CD8-positive, alpha-beta memory T cell (primary cell): ENCODE measurements at regions of chr16 and their contacts with region 1.

Region 1: GRCh38 chr16:56600398-56600999 is 7.9 kb upstream of the MT2A start:
- DNase-seq: peak in 2 of 5 donors; percentile 31 to 60
- H3K4me3 ChIP-seq: no peak overlapping the region
- H3K4me3 Mint-ChIP-seq: no peak overlapping the region
- H3K27ac ChIP-seq: no peak overlapping the region
- H3K27ac Mint-ChIP-seq: no peak overlapping the region
- H3K4me1 ChIP-seq: no peaks in the 10 kb centered on the region
- H3K4me1 Mint-ChIP-seq: peaks cover 0 to 6% (median 5%) of the 10 kb centered on the region in 3 donors
- H3K27me3 ChIP-seq: no peaks in the 10 kb centered on the region
- H3K27me3 Mint-ChIP-seq: peaks cover 8 to 10% of the 10 kb centered on the region in 2 donors

Region 2: GRCh38 chr16:56513972-56514371 is 86.5 kb before region 1 on chr16:
- CTCF ChIA-PET with region 1: interaction called, 11 read pairs
- POLR2A ChIA-PET with region 1: interaction called, 3 read pairs
- DNase-seq: peak; percentile 7 to 63 (median 42)
- H3K4me3 ChIP-seq: no peak overlapping the region
- H3K4me3 Mint-ChIP-seq: no peak overlapping the region
- H3K27ac ChIP-seq: no peak overlapping the region
- H3K27ac Mint-ChIP-seq: peak overlapping the region in 3 of 8 donors; percentile 6 to 24 (median 14)
- H3K4me1 ChIP-seq: peaks cover 13% of the 10 kb centered on the region
- H3K4me1 Mint-ChIP-seq: peaks cover 45 to 63% (median 60%) of the 10 kb centered on the region in 3 donors
- H3K27me3 ChIP-seq: no peaks in the 10 kb centered on the region
- H3K27me3 Mint-ChIP-seq: no peaks in the 10 kb centered on the region

Region 3: DNA sequence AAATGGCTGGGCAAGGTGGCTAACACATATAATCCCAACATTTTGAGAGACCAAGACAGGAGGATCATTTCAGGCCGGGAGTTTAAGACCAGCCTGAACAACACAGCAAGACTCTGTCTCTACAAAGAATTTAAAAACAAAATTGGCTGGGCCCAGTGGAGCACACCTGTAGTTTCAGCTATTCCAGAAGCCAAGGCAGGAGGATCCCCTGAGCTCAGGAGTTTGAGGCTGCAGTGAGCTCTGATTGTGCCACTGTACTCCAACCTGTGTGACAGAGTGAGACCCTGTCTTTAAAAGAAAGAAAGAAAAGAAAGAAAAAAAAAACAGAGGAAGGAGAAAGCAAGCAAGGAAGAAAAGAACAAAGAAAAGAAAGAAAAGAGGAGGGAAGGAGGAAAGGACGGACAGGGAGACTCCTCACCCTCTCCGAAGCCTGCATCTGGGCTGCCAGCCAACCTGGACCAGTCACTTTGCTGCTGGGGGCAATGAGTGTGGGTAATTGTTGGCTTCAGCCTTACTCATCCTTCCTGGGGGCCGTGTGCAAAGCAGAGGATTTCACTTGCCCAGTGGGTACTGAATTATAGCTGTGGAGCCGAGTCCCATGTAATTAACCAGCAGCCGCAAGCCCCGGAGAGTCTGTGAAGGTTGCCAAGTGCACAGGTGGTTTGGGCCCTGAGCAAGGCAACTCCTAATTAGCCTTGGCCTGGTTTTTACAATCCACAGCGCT is 42.3 kb before region 1 on chr16:
- CTCF ChIA-PET with region 1: no interaction called
- POLR2A ChIA-PET with region 1: no interaction called
- DNase-seq: no peak
- H3K4me3 ChIP-seq: no peak overlapping the region
- H3K4me3 Mint-ChIP-seq: no peak overlapping the region
- H3K27ac ChIP-seq: no peak overlapping the region
- H3K27ac Mint-ChIP-seq: peak overlapping the region in 1 of 8 donors; percentile 47
- H3K4me1 ChIP-seq: no peaks in the 10 kb centered on the region
- H3K4me1 Mint-ChIP-seq: no peaks in the 10 kb centered on the region
- H3K27me3 ChIP-seq: no peaks in the 10 kb centered on the region
- H3K27me3 Mint-ChIP-seq: peaks cover 25 to 39% of the 10 kb centered on the region in 2 donors